KBM-7 (cell line): ENCODE measurements at regions of chr9 and their contacts with region 1.

Region 1: DNA sequence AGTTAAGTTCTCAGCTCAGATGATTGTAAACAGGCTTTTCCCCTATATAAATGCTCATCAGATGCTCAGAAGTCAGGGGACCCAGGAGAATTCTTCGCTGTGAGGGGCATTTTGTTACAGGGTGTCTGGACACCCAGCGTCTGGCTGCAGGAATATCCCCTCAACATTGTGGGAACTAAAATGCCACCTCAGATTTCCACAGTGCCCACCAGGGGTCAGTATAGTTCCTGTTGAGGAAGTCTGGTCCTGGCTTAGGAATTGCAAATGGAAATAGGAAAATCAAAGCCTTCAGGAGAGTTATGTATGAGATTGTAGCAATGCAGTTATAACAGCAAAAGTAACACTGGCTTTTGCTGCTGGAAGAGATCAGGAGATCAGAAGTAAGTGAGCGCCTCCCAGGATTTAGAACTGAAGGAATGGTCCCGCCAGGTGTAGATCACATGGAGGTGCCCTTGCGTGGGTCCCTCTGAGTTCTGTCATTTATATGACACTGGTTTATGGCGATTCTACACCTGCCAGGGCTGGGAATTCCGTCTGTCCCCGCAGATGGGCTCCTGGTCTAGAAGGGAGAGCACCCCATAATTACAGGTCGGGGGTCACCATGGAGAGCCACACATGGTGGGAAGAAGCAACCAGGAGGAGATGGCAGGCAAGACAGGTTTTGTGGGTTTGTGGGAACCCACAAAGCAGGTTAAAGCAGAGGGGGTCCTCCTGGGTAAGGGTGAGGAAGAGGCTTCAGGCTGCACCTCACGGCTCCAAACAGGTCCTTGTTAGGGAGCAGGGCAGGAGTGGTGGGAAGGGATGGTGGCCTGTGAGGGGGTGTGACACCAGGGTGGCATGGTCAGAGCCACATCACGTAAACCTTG is 47.0 kb upstream of the CTSL start:
- DNase-seq: peak; percentile 59

Region 2: DNA sequence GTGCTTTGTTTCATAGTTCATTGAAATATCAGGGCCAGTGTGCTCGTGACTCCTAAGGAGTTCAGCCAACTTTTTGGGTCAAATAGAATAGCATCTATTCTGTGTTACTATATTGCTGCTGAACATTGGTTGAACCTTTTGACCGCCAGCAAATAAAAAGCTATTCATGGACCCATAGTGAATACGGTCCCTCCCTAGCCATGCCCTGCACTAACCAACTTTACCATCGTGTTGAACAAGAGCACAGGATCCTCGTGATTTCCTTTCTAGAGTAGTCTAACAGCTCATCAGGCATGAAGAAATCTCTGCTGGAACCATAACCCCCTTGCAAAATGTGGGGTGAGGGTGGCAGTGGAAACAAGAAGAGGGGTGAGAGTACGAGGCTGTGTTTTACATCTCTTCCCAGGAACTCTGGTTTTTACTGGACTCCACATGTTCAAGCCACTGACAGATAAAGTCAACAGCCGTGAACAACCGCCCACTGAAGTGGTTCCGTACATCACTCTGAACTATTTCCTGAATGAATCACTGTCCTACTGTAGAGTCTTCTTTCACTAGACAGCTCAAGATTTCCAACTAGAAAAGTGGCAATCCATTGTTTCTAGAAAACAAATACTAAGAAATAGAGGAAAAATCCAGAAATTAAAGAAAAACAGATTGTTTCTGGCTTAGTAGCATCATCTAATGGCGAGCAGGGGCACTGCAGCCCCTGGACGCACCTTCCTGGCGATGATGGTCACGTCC is 133.7 kb after region 1 on chr9:
- in situ Hi-C with region 1: loop called (anchors 25 kb)
- DNase-seq: peak; percentile 35

Region 3: DNA sequence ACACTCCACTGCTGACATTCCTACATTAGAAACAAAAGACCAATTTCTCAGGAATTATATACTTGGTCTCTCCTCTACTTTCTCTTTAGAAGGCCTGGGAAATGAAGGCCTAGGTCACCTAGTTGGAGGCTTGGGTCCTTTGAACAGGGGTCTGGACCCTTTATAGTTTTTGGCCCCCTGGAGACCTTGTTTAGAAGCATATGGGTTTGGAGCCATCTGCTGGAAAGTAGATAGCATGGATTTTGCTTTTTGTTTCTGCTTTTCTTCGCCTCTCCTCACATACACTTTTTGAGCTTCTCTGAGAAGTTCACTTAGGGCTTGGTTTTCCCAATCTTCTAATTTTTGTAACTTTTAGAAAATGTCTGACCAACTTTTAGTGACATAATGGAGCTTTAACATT is 362.6 kb after region 1 on chr9:
- in situ Hi-C with region 1: loop called (anchors 25 kb)
- DNase-seq: no peak

Region 4: DNA sequence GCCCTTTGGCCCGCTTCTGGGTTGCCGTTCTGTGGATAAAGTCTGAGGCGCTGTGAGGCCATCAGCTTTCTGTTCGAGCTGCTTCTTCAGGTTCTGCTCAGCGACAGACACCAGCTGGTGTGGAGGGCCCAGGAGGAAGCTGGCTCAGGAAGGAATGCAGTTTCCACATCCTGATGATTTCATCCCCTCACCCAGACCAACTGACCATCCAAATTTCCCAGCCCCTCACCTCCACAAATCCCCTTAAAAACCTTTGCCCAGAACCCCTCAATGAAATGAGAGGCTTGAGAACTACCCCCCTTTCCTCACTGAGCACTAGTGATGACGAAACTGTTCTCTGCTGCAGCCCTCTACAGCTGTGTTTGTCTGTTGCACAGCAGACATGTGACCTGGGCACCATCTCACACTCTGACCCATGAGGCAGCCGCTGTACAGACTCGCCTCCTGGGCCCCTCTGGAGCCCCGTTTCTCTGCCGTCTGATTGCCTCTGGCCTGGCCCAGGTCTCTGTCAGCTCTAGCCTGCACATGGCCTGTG is 414.0 kb after region 1 on chr9:
- in situ Hi-C with region 1: no loop called
- DNase-seq: peak; percentile 28

Region 5: GRCh38 chr9:88310310-88310995 is 631.6 kb after region 1 on chr9:
- in situ Hi-C with region 1: no loop called
- DNase-seq: peak; percentile 94